HEK293 (cell line): ENCODE measurements at regions of chr1 and their contacts with region 1.

Region 1: GRCh38 chr1:173997796-173998195 is 24.4 kb downstream of the RC3H1 start:
- H3K4me3 ChIP-seq: no peak overlapping the region
- H3K27ac ChIP-seq: no peak overlapping the region
- H3K4me1 ChIP-seq: no peaks in the 10 kb centered on the region
- CTCF ChIP-seq: no peak

Region 2: GRCh38 chr1:174022080-174022975 is 24.5 kb after region 1 on chr1 and contains the start of gene RC3H1:
- CTCF ChIA-PET with region 1: no interaction called
- POLR2A ChIA-PET with region 1: interaction called, 11 read pairs
- H3K4me3 ChIP-seq: peak within 1 kb of the TSS; percentile 99
- H3K27ac ChIP-seq: peak within 1 kb of the TSS; percentile 81
- H3K4me1 ChIP-seq: peaks cover 14% of the 10 kb centered on the region
- CTCF ChIP-seq: no peak